Transverse colon (tissue), 4 donors: ENCODE measurements at regions of chr1 and their contacts with region 1.

Region 1: GRCh38 chr1:151534665-151535278 is 5.3 kb upstream of the TUFT1 start:
- DNase-seq: peak; percentile 84
- H3K4me3 ChIP-seq: no peak overlapping the region
- H3K27ac ChIP-seq: no peak overlapping the region
- H3K4me1 ChIP-seq: peaks cover 7 to 9% (median 9%) of the 10 kb centered on the region in 4 donors
- H3K27me3 ChIP-seq: no peaks in the 10 kb centered on the region
- CTCF ChIP-seq: peak; percentile 72 to 84 (median 82)
- EP300 ChIP-seq: no peak
- POLR2A ChIP-seq: no peak

Region 2: GRCh38 chr1:151472856-151473731 is 61.7 kb before region 1 on chr1:
- in situ Hi-C with region 1: no loop called
- intact Hi-C with region 1: no loop called
- DNase-seq: peak; percentile 49
- H3K4me3 ChIP-seq: peak overlapping the region; percentile 54 to 82 (median 56)
- H3K27ac ChIP-seq: peak overlapping the region; percentile 75 to 88 (median 85)
- H3K4me1 ChIP-seq: peaks cover 0 to 15% (median 3%) of the 10 kb centered on the region in 4 donors
- H3K27me3 ChIP-seq: no peaks in the 10 kb centered on the region
- CTCF ChIP-seq: no peak
- EP300 ChIP-seq: no peak
- POLR2A ChIP-seq: no peak

Region 3: GRCh38 chr1:151739590-151740375 is 205.0 kb after region 1 on chr1:
- in situ Hi-C with region 1: no loop called
- intact Hi-C with region 1: loop called (anchors 5 kb)
- DNase-seq: peak; percentile 50
- H3K4me3 ChIP-seq: no peak overlapping the region
- H3K27ac ChIP-seq: no peak overlapping the region
- H3K4me1 ChIP-seq: peaks cover 0 to 5% (median 0%) of the 10 kb centered on the region in 4 donors
- H3K27me3 ChIP-seq: no peaks in the 10 kb centered on the region
- CTCF ChIP-seq: no peak
- EP300 ChIP-seq: no peak
- POLR2A ChIP-seq: no peak